Mucosa of descending colon (tissue), 3 donors: ENCODE measurements at regions of chr10 and their contacts with region 1.

Region 1: DNA sequence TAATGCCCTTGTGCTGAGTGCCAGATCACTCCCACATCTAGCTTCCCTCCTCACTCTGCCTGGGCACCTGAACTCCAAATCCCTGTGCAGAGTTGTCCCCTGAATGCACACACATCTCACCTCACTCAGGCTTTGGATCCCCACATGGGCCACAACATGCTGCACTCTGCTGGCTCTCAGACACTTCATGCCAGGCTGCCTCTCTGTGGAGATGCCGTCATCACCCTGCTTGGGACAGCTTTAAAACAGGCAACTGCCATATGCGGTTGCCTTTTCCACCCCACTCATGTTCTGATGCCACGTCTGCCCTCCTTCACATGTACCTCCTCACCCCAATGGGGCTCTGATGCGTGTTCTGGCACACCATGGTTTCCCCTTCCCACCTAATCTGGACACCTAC is 477.0 kb downstream of the GFRA1 start:
- DNase-seq: no peak
- ATAC-seq: no peak
- H3K4me3 ChIP-seq: no peak overlapping the region
- H3K4me1 ChIP-seq: no peaks in the 10 kb centered on the region
- CTCF ChIP-seq: no peak

Region 2: GRCh38 chr10:115866691-115867090 is 70.7 kb after region 1 on chr10:
- intact Hi-C with region 1: no loop called
- DNase-seq: no peak
- ATAC-seq: no peak
- H3K4me3 ChIP-seq: no peak overlapping the region
- H3K4me1 ChIP-seq: no peaks in the 10 kb centered on the region
- CTCF ChIP-seq: no peak

Region 3: DNA sequence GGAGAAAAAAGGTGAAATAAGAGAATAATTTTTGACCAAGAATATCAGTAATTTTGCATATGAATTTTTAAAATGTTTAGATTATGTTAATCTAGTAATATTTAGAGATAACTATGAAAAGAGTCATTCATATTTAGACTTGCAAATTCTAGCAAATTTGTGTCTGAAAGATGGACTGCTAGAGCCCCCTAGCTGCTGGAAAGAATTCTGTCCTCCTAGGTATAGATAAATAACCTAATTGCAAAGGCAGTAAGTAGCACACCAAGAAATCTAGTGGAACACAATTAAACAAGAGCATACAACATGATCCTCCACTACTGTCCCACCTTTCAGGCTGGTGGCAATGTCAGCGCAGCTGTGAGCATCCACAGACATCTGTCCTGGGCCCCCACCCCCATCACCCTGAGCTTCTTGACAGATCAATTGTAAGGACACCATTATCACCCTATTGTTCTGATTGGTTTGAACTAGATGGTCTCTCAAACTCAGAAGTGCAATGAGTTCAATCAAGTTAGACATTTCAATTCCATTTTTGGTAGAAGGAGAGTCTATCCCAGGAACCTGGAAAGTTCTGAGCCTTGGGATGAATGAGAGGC is 492.0 kb after region 1 on chr10:
- intact Hi-C with region 1: loop called (anchors 5 kb)
- DNase-seq: peak in 1 of 3 donors; percentile 37
- ATAC-seq: no peak
- H3K4me3 ChIP-seq: no peak overlapping the region
- H3K4me1 ChIP-seq: no peaks in the 10 kb centered on the region
- CTCF ChIP-seq: no peak

Region 4: DNA sequence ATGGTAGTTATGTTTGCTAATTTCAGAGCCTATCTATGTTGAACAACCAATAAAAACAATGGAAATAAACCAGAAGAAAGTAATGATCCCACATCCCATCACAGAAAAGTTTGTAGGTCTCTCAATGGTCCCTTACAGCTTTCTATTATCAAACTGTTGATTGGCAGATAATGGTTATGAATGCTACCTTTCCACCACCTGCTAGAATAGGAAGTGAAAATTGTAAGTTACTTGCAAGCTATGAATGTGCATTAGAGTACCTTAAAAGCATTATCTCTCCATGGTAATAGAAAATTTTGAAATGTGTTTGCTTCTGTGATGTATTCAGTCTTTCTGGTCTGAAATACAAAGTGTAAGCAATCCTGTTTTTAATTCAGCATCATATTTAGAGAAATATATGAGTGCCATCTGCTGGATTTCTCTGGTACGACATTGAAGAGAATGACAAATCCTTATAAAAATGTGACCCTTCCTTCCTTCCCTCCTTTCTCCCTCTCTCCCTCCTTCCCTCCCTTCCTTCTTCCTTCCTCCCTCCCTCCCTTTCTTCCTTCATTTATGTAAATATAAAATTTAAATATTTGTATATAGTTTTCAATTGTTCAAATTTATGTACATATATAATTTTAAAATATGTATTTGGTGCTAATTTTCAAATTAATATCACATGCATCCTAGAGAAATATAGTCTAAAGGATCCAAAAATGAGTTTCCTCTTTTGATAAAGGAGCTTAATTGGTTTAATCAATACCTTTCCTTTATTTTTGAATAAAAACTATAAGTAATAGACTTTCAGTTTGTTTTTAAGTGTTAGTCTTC is 590.2 kb after region 1 on chr10:
- intact Hi-C with region 1: loop called in 1 of 2 experiments (anchors 5 kb)
- DNase-seq: peak in 1 of 3 donors; percentile 54
- ATAC-seq: no peak
- H3K4me3 ChIP-seq: no peak overlapping the region
- H3K4me1 ChIP-seq: no peaks in the 10 kb centered on the region
- CTCF ChIP-seq: no peak